ENCODE measurements at regions of chr17 and their contacts with region 1.

Region 1: GRCh38 chr17:17134957-17135333 is 71.2 kb downstream of the PLD6 start:
- DNase-seq: no peak
- H3K4me3 ChIP-seq: no peak overlapping the region
- H3K27ac ChIP-seq: no peak overlapping the region
- H3K4me1 ChIP-seq: no peaks in the 10 kb centered on the region
- H3K27me3 ChIP-seq: no peaks in the 10 kb centered on the region

Region 2: DNA sequence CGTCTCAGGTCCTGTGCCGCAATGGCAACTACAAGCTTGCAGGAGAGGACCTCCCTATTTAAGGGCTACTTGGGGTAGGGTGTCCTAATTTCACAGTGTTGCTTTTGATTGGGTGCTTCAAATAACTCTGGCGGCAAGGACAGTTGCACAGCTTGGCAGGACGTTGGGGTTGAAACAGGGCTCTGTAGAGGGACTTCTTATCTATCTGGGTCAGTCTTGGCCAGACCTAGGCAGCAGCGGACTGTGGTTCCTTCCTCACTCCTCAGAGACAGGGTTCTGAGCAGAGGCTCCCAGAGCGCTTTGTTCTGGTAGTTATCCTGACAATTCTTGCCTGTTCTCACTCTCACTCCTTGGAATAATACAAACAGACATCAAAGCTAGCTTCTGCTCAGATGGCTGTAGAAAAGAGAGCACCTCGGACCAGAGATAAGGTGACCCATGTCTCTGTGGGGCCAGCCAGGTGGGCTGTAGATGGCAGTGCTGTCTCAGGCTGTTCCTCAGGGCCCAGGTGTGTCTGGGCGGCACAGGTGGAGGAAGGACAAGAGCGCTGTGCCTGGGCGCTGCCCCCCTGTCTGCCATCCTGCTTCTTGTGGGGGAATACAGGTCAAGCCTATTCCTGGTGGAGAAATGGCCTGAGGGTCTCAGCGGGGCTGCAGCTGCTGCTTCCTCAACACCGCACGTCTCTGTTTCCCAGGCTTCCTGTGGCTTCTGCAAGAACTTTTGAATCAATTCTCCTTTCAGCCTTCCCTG is 10.1 kb after region 1 on chr17:
- CTCF ChIA-PET with region 1: interaction called, 13 read pairs
- POLR2A ChIA-PET with region 1: no interaction called
- DNase-seq: peak in 2 of 3 donors; percentile 7 to 50
- H3K4me3 ChIP-seq: peak overlapping the region in 1 of 7 experiments; percentile 19
- H3K27ac ChIP-seq: peak overlapping the region in 1 of 2 experiments; percentile 57
- H3K4me1 ChIP-seq: peaks cover 0 to 27% (median 12%) of the 10 kb centered on the region in 4 experiments
- H3K27me3 ChIP-seq: no peaks in the 10 kb centered on the region